HEK293T (cell line): ENCODE measurements at regions of chr19 and their contacts with region 1.

Region 1: DNA sequence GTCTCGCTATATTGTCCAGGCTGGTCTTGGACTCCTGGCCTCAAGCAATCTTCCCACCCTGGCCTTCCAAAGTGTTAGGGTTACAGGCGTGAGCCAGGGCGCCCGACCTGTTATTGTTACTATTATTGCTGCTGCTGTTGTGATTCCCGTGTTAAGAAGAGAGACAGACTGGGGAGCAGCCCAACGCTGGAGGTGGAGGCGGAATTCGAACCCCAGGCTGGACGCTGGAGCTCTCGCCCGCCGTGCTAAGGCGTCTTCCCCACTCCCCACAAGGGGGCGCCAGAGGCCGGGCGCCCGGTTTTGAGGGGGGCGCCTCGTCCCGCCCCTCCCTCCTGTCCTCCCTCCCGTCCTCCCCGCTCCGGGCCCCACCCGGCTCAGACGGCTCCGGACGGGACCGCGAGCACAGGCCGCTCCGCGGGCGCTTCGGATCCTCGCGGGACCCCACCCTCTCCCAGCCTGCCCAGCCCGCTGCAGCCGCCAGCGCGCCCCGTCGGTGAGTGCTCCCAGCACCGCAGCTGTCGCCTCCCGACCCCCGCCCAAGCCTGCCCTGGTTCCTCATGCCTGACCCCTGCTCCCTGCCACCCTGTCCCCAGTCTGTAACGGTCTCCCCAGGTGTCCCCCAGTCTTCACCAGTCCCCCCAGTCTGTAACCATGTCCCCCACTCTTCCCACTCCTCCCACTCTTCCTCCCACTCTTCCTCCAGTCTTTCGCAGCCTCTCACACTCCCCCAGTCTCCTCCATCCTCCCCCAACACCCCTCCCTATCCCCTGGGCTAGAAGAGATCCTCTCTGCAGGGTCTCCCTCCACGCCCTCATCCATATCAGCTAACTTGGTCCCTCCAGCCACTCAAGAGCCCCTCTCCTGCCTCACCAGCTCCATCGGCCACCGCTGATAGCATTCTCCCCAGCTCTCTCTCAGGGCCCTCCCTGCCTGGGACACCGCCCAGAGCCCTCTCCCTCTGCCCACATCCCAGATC is at the start of gene EHD2:
- DNase-seq: peak; percentile 80

Region 2: GRCh38 chr19:47652285-47652684 is 61.0 kb before region 1 on chr19:
- CTCF ChIA-PET with region 1: no interaction called
- POLR2A ChIA-PET with region 1: no interaction called
- DNase-seq: no peak

Region 3: GRCh38 chr19:47745010-47745901 is 31.9 kb after region 1 on chr19 and contains the start of gene NOP53:
- CTCF ChIA-PET with region 1: interaction called, 21 read pairs
- POLR2A ChIA-PET with region 1: interaction called, 19 read pairs
- DNase-seq: peak; percentile 95